Posterior cingulate gyrus (tissue), 11 donors: ENCODE measurements at regions of chr12 and their contacts with region 1.

Region 1: DNA sequence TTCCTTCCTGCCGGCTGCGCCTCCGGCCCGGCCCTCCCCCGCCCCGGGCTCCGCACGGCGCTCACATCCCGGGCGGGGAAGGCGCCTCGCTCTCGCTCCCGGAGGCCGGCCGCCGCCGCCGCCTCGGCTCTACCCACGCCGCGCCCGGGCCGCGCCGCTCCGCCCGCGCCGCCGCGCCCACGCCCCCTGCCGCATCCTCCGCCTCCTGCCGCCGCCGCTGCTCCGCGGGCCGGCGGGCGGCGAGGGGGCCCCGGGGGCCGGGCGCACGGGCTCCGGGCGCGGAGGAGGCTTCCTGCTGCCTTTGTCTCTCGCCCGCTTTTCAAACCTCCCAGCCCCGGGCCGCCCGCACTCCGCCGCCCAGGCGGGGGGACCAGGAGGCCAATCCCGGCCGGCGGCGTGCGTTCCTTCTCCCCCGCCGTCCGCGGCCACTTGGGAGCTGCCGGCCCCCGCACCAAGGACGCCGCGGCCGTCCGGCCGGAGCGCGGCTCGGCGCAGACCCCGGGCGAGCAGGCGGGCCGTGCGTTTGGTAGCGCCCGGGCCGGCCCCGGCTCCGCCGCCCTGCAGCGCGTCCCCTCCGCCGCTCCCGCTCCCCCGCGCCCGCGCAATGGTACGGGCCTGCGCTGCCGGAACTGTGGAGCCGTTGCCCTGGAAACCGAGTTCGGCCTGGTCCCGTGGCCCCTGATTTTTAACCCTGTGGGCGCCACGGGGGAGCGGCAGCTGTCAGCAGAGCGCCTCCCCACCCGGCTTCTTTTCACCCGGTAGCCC is at the start of gene FBXL14:
- DNase-seq: peak; percentile 85 to 98 (median 88)

Region 2: DNA sequence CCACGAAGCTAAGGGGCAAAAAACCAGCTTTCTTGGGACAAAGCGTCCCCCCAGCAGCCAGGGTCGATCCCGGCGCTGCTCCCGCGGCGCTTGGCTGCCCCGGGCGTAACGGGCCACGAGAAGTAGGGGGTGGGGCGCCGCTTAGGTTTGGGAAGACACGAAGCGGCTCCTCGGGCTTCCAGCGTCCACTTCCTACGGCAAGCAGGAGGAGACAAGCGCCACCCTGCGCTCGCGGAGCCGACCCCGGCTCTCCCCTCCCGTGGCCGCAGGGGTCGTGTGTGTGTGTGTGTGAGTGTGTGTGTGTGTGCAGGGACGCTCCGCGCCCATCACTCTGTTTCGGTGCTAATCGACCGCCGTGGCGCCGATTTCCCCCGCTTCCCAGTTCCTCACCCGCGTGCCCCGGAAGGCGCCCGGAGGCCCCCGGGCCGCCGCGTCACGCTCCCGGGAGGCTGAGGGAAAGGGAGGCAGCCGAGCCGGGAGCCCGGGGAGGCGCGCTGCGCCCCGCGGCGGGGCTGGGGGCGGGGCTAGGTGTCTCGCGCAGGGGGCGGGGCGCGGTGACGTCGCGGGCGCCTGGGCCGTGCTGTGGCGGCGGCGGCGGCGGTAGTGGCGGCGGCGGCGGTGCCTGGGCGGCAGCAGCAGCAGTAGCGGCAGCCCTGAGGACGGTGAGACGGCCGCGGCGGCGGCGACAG is 603.6 kb before region 1 on chr12 and contains the start of gene ERC1:
- intact Hi-C with region 1: loop called (anchors 5 kb)
- DNase-seq: peak; percentile 75 to 98 (median 86)

Region 3: DNA sequence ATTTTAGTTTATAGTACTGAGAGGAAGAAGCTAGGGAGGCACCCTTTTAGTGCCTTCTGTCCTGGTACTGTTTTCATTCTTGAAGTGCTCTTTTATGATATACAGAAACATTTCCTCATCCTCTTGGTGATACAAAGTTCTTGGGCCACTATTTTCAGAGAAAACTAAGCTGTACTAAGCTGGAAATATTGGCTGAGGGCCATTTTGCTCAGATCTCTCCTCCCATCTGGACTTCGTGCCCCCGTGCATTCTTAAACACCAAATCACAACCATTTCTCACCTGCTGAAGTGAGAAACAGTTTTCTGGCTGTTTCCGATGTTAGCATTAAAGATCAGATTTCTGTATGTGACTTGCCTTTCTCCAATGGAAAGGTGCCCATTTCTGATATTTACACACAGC is 159.0 kb before region 1 on chr12:
- intact Hi-C with region 1: no loop called
- DNase-seq: no peak

Region 4: GRCh38 chr12:1562813-1563407 is 31.5 kb before region 1 on chr12:
- intact Hi-C with region 1: no loop called
- DNase-seq: peak in 1 of 10 donors; percentile 32